ENCODE measurements at regions of chr1 and their contacts with region 1.

Region 1: DNA sequence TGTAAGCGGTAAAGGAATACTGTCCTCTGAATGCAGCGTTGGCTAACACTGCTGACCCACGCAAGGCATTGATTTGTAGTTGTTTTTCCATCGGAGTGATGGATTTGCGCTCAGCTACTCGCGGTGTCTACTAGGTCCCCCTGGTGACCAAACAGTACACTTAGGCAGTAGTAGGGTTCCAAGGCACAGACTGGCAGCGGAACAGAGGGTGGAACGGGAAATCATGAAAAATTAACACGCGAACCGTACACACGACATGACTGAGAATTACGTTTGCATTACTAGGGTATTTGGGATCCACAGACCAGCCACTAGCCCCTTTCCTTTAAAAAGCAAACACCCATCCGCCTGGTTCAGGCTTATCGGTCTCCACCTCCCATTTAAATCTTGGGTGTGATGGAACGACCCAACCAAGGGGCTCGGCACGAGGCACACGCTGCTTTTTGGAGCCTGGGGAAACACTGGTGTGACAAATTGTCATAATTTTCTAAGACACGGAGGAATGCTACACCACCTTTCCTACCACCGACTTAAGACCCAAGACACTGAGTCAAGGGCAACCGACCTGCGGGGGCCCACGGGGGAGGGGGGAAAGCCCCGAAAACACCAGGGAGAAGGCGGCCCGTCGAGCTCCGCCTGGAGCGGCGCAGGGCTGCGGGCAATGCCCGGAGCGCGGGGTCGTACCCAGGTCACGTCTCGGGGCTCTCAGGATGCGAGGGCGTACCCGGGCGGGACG is 699 bp downstream of the DIPK1A start:
- DNase-seq: peak; percentile 73
- H3K4me3 Mint-ChIP-seq: peak overlapping the region; percentile 94
- H3K27ac Mint-ChIP-seq: peak overlapping the region; percentile 93
- H3K4me1 Mint-ChIP-seq: peaks cover 40% of the 10 kb centered on the region
- H3K27me3 Mint-ChIP-seq: no peaks in the 10 kb centered on the region

Region 2: DNA sequence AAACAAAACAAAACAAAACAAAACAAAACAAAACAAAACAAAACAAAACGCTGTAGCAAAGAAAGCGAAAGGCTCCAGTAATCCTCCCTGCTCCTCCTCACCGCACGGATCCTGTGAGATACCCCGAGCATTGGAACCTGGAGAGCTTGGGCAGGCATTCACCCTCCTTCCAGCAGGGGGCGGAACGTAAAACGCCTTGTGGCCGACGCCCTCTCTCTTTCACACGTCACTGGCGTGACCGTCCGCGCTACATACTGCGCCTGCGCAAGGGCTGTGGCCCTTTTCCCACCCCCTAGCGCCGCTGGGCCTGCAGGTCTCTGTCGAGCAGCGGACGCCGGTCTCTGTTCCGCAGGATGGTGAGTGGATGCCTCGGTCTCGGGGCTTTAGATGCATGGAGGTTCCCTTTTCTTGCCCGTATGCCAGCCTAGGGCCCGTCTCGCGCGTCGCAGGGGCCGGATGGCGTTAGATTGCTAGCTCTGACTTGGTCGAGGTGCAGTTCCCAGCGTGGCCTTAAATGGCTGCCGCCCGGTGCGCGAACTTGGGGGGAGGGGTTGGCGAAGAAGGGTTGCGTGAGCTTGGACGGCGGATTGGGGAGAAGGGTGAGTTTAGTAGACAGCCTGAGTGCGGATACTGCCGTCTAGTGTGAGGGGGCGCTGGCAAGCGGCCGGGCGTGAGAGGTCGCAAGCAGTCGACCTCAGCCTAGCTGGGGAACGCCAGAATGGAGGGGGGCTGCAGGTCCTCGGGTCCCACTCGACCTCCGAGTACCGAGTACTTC is 128.6 kb before region 1 on chr1 and contains the start of gene RPL5:
- CTCF ChIA-PET with region 1: interaction called, 33 read pairs
- POLR2A ChIA-PET with region 1: interaction called, 54 read pairs
- DNase-seq: peak; percentile 97
- H3K4me3 Mint-ChIP-seq: peak within 1 kb of the TSS; percentile 92
- H3K27ac Mint-ChIP-seq: peak within 1 kb of the TSS; percentile 84
- H3K4me1 Mint-ChIP-seq: peaks cover 50% of the 10 kb centered on the region
- H3K27me3 Mint-ChIP-seq: no peaks in the 10 kb centered on the region
- total RNA-seq, gene RPL5: 660 to 678 TPM

Region 3: DNA sequence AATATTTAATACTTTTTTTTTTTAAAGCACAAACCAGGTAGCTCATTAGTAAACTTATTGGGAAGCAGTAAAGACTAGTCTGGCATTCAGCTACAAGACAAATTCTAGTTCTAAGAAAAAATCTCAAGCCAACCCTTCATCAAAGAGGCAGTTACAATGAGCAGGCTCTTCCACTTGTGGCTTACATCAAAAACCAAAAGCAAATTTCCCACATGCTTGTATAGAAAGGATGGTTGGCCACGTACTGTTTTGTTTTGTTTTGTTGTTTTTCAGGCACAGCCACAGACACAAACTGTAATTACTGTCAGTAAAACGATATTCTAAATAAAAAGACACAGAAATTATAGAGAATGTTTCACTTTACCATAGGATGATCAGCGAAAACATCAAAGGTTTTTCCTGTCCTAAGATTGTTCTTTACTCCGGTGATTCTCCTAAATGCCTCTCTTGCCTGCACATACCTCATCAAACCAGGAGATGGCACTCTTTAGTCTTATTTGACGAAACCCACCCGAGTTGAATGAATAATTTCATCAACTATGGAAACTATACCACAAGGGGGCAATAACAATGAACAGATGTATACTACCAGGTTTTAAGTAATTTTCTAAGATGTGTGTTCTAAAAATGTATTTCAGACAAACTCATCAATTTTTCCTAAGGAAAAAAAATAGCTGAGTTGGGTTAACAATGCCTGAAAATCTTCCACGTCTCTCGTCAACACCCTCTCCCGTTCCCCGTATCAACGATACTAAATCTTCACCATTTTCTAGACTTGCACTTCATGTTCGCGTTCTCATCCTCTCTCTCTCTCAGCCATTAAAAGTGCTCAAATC is 101.8 kb before region 1 on chr1:
- CTCF ChIA-PET with region 1: interaction called, 168 read pairs
- POLR2A ChIA-PET with region 1: interaction called, 65 read pairs
- DNase-seq: peak; percentile 51
- H3K4me3 Mint-ChIP-seq: peak overlapping the region; percentile 32
- H3K27ac Mint-ChIP-seq: peak overlapping the region; percentile 19
- H3K4me1 Mint-ChIP-seq: peaks cover 27% of the 10 kb centered on the region
- H3K27me3 Mint-ChIP-seq: no peaks in the 10 kb centered on the region

Region 4: DNA sequence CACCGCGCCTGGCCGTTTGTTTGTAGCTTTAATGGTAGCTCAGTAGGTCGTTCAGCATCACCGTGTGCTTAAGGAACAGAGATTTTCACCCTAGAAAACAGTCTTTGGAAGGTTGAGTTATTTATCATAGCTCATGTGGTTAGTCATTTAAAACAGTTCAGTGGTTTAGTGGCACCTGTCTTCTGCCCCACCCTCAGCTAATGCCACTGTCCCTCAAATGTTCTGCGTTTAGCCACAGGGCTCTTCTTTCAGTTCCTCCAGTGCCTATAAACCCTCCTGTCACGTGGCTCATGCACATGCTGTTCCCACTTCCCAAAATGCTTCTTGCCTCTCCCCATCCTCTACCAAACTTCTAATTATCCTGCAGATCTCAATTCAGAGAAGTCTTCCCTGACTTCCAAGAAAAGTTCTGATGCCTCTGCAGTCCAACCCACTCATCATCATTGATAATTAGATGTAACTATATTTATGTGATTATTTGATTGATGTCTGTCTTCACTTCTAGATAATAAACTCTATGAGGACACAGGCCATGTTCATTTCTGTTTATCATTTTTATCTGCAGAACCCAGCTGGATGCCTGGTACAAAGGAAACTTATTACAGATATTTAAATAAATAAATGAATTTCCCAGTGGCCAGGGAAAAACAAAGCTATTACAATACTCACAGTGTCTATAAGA is 15.1 kb after region 1 on chr1:
- CTCF ChIA-PET with region 1: interaction called, 60 read pairs
- POLR2A ChIA-PET with region 1: interaction called, 259 read pairs
- DNase-seq: peak; percentile 53
- H3K4me3 Mint-ChIP-seq: no peak overlapping the region
- H3K27ac Mint-ChIP-seq: peak overlapping the region; percentile 82
- H3K4me1 Mint-ChIP-seq: peaks cover 75% of the 10 kb centered on the region
- H3K27me3 Mint-ChIP-seq: no peaks in the 10 kb centered on the region

Region 5: DNA sequence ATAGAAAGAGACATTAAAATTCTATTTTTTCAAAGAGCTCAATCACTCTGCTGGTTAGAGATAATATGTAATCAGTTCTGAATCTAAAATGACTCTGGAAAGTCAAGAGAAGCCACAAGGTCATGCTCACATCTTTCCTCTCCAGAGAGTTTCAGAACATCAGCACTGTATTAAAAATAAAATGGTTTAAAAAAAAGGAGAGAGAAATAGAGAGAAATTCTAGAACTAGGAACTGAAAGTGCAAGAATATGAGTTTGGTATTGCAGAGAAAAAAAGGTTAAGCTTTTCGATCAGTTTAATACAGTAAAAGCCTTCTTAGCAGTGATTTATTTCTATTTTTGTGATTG is 44.7 kb after region 1 on chr1:
- CTCF ChIA-PET with region 1: interaction called, 5 read pairs
- POLR2A ChIA-PET with region 1: interaction called, 11 read pairs
- DNase-seq: no peak
- H3K4me3 Mint-ChIP-seq: no peak overlapping the region
- H3K27ac Mint-ChIP-seq: no peak overlapping the region
- H3K4me1 Mint-ChIP-seq: no peaks in the 10 kb centered on the region
- H3K27me3 Mint-ChIP-seq: peaks cover 28% of the 10 kb centered on the region

Region 6: DNA sequence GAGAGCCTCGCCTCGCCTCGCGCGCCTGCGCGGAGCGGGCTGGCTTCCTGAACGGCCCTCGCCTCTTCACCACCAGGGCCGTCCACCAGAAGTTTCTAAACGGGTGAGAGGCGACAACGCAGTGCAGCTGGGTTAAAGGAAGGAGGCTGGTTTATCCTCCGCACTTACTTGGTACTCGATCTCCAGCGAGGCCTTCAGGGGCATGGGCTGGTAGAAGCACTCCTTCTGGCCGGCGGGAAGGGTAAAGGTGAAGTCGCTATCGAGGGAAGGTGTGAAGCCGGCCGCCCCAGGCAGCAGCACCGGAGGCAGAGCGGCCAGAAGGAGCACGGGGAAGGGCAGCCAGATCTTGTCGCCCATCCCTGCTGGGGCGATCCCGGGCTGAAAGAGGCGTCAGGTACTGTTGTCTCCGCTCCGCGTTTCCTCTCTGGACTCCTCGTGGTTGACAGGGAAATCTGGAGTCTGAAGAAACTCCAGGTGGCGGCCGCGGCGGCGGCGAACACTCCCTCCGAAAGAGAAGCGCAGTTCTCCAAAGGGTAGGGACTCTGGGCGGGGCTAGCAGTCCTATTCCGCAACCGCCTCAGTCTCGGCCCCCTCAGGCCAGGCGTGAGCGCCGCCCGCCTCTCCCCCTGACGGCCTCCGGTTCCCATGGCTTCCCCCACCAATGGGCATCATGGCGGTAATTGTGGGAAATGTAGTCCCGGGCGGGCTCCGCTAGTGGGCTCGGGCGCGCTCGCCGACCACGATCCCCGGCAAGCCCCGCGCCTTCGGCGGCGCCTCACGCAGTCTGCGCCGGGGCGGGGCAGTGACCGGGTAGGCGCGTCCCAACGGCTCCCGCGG is 219.5 kb after region 1 on chr1 and contains the start of gene TMED5:
- CTCF ChIA-PET with region 1: interaction called, 3 read pairs
- POLR2A ChIA-PET with region 1: interaction called, 11 read pairs
- DNase-seq: peak; percentile 98
- H3K4me3 Mint-ChIP-seq: peak within 1 kb of the TSS; percentile 89
- H3K27ac Mint-ChIP-seq: peak within 1 kb of the TSS; percentile 98
- H3K4me1 Mint-ChIP-seq: peaks cover 55% of the 10 kb centered on the region
- H3K27me3 Mint-ChIP-seq: no peaks in the 10 kb centered on the region
- total RNA-seq, gene TMED5: 67.4 to 70.8 TPM